ENCODE measurements at regions of chr5 and their contacts with region 1.

Region 1: DNA sequence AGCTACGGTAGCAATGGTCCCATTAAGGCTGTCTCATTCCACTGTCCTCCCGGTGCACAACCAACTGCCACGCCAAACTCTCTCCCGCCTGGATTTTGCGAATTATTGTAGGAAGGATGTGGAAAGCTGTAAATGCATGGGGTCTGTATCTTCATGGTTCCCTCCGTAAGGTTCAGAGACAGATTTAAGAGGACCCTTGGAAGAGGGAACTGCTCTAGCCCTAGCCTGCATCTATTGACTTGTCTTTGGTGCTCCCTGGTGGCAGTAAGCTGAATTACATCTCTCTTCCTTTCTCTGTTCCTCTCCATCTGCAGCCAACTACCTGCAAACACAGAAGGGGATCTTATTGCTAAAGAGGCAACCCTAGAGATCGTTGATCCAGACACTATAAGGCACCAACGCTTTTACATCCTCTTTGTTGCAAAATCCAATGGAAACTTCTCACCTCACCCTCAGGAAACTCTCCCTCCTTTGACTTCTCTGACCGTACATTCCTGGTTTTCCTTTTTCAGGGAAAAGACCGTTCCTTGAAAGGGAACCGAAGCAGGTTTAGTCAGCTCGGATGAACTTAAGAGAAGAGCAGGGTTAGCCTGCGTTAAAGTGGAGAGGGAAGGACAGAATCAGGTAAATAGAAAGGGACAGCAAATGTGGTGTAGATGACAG is 11.9 kb downstream of the CAPSL start:
- DNase-seq: peak; percentile 35 to 79 (median 66)
- ATAC-seq: peak; percentile 56
- H3K4me3 ChIP-seq: no peak overlapping the region
- H3K4me3 Mint-ChIP-seq: peak overlapping the region; percentile 33
- H3K27ac ChIP-seq: no peak overlapping the region
- H3K27ac Mint-ChIP-seq: no peak overlapping the region
- H3K4me1 ChIP-seq: peaks cover 14% of the 10 kb centered on the region
- H3K4me1 Mint-ChIP-seq: peaks cover 36% of the 10 kb centered on the region
- H3K27me3 ChIP-seq: no peaks in the 10 kb centered on the region
- H3K27me3 Mint-ChIP-seq: peaks cover 4% of the 10 kb centered on the region
- CTCF ChIP-seq: peak; percentile 84

Region 2: DNA sequence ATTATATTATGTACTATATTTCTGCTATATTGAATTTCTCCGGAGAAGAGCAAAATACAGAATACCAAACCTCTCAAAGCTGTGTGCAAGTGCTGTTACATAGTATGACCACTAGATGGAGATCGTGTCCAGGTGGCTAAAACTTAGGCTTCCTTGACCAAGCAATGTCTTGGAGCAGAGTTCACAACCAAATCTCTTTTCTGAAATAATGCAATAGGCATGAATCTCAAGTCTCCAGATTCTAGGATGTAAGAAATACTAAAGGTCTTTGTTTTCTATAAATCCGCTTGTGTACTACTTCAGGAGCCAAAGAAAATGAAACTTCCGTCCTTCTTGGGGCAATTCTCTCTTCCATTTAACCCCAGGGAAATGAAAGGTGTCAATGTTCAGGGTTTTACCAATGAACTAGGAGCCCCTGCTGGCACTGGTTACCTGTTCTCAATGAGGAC is 1451.9 kb before region 1 on chr5:
- CTCF ChIA-PET with region 1: no interaction called
- POLR2A ChIA-PET with region 1: no interaction called
- intact Hi-C with region 1: loop called in 1 of 2 experiments (anchors 2 kb)
- DNase-seq: peak in 2 of 9 experiments; percentile 48 to 57
- ATAC-seq: peak; percentile 62
- H3K4me3 ChIP-seq: no peak overlapping the region
- H3K4me3 Mint-ChIP-seq: no peak overlapping the region
- H3K27ac ChIP-seq: no peak overlapping the region
- H3K27ac Mint-ChIP-seq: no peak overlapping the region
- H3K4me1 ChIP-seq: no peaks in the 10 kb centered on the region
- H3K4me1 Mint-ChIP-seq: peaks cover 3% of the 10 kb centered on the region
- H3K27me3 ChIP-seq: no peaks in the 10 kb centered on the region
- H3K27me3 Mint-ChIP-seq: peaks cover 15% of the 10 kb centered on the region
- CTCF ChIP-seq: peak; percentile 97

Region 3: DNA sequence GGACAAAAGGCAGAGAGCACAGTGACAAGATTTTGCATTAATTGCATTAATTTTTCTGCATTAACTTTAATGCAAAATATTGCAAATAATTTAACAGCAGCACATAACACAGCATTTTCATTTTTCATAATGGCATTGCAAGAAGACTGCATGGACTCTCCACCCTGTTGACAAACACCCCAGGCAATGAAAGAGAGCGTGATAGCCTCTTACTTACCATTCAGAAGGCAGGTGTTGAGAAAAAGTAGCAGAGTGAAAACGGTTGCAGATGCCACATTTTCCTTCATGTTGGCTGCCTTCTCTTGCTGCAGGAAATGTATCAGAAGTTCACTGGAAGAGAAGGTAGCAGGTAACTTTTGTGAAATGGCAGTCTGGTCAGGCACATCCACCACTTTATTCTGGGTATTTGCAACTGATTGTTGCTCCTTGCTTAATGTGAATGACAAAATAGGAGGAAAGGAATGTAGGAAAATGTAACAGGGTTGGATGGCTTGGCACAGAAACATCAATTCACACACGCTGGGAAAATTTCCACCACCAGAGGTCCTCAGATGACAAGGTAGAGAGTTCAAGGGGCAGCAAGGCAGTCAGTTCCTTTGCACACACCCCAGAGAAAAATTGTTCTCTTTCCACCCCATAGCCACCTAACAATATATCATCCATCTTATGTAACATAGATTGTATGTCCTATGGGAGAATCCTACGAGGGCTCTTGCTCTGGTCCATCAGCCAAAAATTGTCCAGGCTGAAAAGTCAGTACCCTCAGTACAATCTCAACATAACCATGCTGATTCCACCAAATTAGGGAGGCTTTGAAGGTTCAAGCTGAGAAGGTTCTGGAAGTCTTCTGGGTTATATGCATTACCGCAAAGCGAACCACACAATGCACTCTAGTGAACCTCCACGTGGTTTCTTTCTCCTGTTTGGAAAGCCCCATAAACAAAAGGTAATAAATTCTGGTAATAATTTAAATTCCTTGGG is 836.9 kb before region 1 on chr5:
- CTCF ChIA-PET with region 1: interaction called, 123 read pairs
- POLR2A ChIA-PET with region 1: interaction called, 5 read pairs
- intact Hi-C with region 1: loop called in 1 of 2 experiments (anchors 1 kb)
- DNase-seq: peak; percentile 16 to 68 (median 57)
- ATAC-seq: no peak
- H3K4me3 ChIP-seq: no peak overlapping the region
- H3K4me3 Mint-ChIP-seq: no peak overlapping the region
- H3K27ac ChIP-seq: no peak overlapping the region
- H3K27ac Mint-ChIP-seq: no peak overlapping the region
- H3K4me1 ChIP-seq: no peaks in the 10 kb centered on the region
- H3K4me1 Mint-ChIP-seq: no peaks in the 10 kb centered on the region
- H3K27me3 ChIP-seq: no peaks in the 10 kb centered on the region
- H3K27me3 Mint-ChIP-seq: peaks cover 3% of the 10 kb centered on the region
- CTCF ChIP-seq: peak; percentile 68

Region 4: GRCh38 chr5:35617435-35618303 is 308.9 kb before region 1 on chr5 and contains the start of gene SPEF2:
- CTCF ChIA-PET with region 1: interaction called, 32 read pairs
- POLR2A ChIA-PET with region 1: no interaction called
- intact Hi-C with region 1: loop called in 1 of 2 experiments (anchors 1 kb)
- DNase-seq: peak; percentile 54 to 90 (median 80)
- ATAC-seq: peak; percentile 84
- H3K4me3 ChIP-seq: peak within 1 kb of the TSS; percentile 84 to 88
- H3K4me3 Mint-ChIP-seq: peak within 1 kb of the TSS; percentile 91
- H3K27ac ChIP-seq: peak within 1 kb of the TSS; percentile 60 to 63
- H3K27ac Mint-ChIP-seq: peak within 1 kb of the TSS; percentile 95
- H3K4me1 ChIP-seq: peaks cover 16% of the 10 kb centered on the region
- H3K4me1 Mint-ChIP-seq: peaks cover 31% of the 10 kb centered on the region
- H3K27me3 ChIP-seq: no peaks in the 10 kb centered on the region
- H3K27me3 Mint-ChIP-seq: no peaks in the 10 kb centered on the region
- CTCF ChIP-seq: peak; percentile 78
- total RNA-seq, gene SPEF2: 3.5 to 4.7 TPM

Region 5: GRCh38 chr5:35657877-35658276 is 268.6 kb before region 1 on chr5:
- CTCF ChIA-PET with region 1: interaction called, 363 read pairs
- POLR2A ChIA-PET with region 1: interaction called, 22 read pairs
- intact Hi-C with region 1: loop called in 1 of 2 experiments (anchors 2 kb)
- DNase-seq: peak in 2 of 9 experiments; percentile 22 to 35
- ATAC-seq: peak; percentile 55
- H3K4me3 ChIP-seq: no peak overlapping the region
- H3K4me3 Mint-ChIP-seq: no peak overlapping the region
- H3K27ac ChIP-seq: no peak overlapping the region
- H3K27ac Mint-ChIP-seq: peak overlapping the region; percentile 29
- H3K4me1 ChIP-seq: no peaks in the 10 kb centered on the region
- H3K4me1 Mint-ChIP-seq: peaks cover 20% of the 10 kb centered on the region
- H3K27me3 ChIP-seq: no peaks in the 10 kb centered on the region
- H3K27me3 Mint-ChIP-seq: no peaks in the 10 kb centered on the region
- CTCF ChIP-seq: no peak

Region 6: GRCh38 chr5:35822511-35822910 is 104.0 kb before region 1 on chr5:
- CTCF ChIA-PET with region 1: interaction called, 20 read pairs
- POLR2A ChIA-PET with region 1: no interaction called
- intact Hi-C with region 1: no loop called
- DNase-seq: peak; percentile 22 to 84 (median 63)
- ATAC-seq: peak; percentile 74
- H3K4me3 ChIP-seq: no peak overlapping the region
- H3K4me3 Mint-ChIP-seq: peak overlapping the region; percentile 58
- H3K27ac ChIP-seq: peak overlapping the region; percentile 12 to 34
- H3K27ac Mint-ChIP-seq: peak overlapping the region; percentile 94
- H3K4me1 ChIP-seq: peaks cover 93% of the 10 kb centered on the region
- H3K4me1 Mint-ChIP-seq: peaks cover 90% of the 10 kb centered on the region
- H3K27me3 ChIP-seq: no peaks in the 10 kb centered on the region
- H3K27me3 Mint-ChIP-seq: no peaks in the 10 kb centered on the region
- CTCF ChIP-seq: no peak

Region 7: DNA sequence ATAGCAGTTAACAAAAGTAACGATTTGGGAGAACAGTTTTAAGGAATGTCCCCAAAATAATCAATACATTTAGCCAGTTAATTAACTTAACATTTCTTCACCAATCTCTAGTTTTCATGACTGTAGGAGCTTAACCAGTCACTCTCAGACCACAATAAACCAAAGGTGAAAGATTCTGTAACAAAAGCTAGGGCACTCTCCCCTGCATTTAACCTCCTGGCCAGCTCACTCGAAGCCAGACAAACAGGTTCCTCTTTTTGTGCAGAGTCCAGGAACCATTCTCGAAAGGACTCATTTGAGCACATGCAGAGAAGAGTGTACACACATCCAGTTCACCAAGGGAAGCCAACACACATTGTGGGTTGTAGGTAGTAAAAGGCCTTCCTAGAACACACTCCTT is 63.4 kb before region 1 on chr5:
- CTCF ChIA-PET with region 1: interaction called, 21 read pairs
- POLR2A ChIA-PET with region 1: interaction called, 7 read pairs
- intact Hi-C with region 1: no loop called
- DNase-seq: peak in 1 of 9 experiments; percentile 22
- ATAC-seq: no peak
- H3K4me3 ChIP-seq: peak overlapping the region; percentile 66 to 80
- H3K4me3 Mint-ChIP-seq: peak overlapping the region; percentile 91
- H3K27ac ChIP-seq: peak overlapping the region; percentile 59 to 97
- H3K27ac Mint-ChIP-seq: peak overlapping the region; percentile 96
- H3K4me1 ChIP-seq: peaks cover 52% of the 10 kb centered on the region
- H3K4me1 Mint-ChIP-seq: peaks cover 76% of the 10 kb centered on the region
- H3K27me3 ChIP-seq: no peaks in the 10 kb centered on the region
- H3K27me3 Mint-ChIP-seq: no peaks in the 10 kb centered on the region
- CTCF ChIP-seq: no peak

Region 8: GRCh38 chr5:36478646-36479317 is 552.3 kb after region 1 on chr5:
- CTCF ChIA-PET with region 1: no interaction called
- POLR2A ChIA-PET with region 1: no interaction called
- intact Hi-C with region 1: no loop called
- DNase-seq: no peak
- ATAC-seq: no peak
- H3K4me3 ChIP-seq: no peak overlapping the region
- H3K4me3 Mint-ChIP-seq: no peak overlapping the region
- H3K27ac ChIP-seq: no peak overlapping the region
- H3K27ac Mint-ChIP-seq: no peak overlapping the region
- H3K4me1 ChIP-seq: no peaks in the 10 kb centered on the region
- H3K4me1 Mint-ChIP-seq: no peaks in the 10 kb centered on the region
- H3K27me3 ChIP-seq: no peaks in the 10 kb centered on the region
- H3K27me3 Mint-ChIP-seq: no peaks in the 10 kb centered on the region
- CTCF ChIP-seq: no peak

Measured in CD8-positive, alpha-beta T cell (primary cell).